ENCODE measurements at regions of chr3 and their contacts with region 1.

Region 1: DNA sequence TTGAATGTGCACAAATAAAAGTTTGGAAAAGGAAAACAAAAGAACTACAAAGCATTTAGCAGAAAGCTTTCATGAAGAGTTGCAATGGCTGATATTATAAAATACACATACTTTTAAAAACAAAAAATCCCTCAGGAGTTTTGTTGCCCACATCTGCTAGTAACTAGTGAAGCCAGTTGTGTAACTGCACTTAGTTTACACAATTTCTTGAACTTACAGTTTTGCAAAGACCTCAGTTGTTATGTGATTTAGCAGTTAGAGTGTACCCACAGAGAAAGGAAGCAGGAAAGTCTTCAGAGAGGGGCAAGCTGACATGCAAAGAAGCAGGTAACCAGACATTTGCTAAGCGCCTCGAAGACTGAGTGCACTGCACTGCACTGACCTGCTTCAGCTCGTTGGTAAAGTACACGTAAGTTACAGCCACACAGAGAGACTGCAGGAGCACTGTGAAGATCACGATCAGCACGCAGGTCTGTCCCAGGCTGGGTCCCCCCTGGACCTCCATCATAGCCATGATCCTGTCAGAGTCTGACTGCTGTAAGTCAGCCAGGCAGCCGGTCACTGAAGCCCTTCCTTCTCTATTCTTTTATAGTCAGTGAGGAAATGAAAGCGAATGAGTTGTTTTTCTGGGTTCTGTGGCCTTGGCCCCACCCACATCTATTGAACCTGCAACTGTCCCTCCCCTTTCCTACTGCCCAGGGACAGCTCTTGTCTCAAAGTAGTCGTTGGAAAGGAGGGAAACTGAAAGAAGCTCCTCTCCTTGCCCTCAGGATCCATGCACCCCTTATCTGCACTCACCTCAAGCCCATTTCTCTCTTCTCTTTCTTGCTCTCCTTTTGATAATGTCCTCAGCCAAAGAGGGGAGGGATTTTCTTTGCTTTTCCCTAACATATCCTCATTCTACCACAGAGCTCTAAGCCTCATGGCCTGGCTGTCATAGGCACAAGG is at the start of gene TNFSF10:
- DNase-seq: peak; percentile 15 to 71 (median 39)
- ATAC-seq: peak; percentile 80 to 86 (median 82)
- H3K4me3 ChIP-seq: peak within 1 kb of the TSS; percentile 64 to 73
- H3K4me3 Mint-ChIP-seq: peak within 1 kb of the TSS; percentile 93 to 97 (median 96)
- H3K27ac ChIP-seq: peak within 1 kb of the TSS; percentile 84
- H3K27ac Mint-ChIP-seq: peak within 1 kb of the TSS; percentile 98 to 99
- H3K4me1 ChIP-seq: peaks cover 18 to 25% of the 10 kb centered on the region in 2 experiments
- H3K4me1 Mint-ChIP-seq: peaks cover 53 to 64% (median 55%) of the 10 kb centered on the region in 3 donors
- H3K27me3 ChIP-seq: no peaks in the 10 kb centered on the region
- H3K27me3 Mint-ChIP-seq: no peaks in the 10 kb centered on the region
- total RNA-seq, gene TNFSF10: 22.3 to 49.7 (median 35.8) TPM

Region 2: GRCh38 chr3:172511783-172512762 is 11.1 kb before region 1 on chr3:
- CTCF ChIA-PET with region 1: interaction called in 1 of 2 experiments, 4 read pairs
- POLR2A ChIA-PET with region 1: interaction called in 1 of 2 experiments, 12 read pairs
- DNase-seq: peak in 34 of 35 experiments; percentile 26 to 77 (median 56)
- ATAC-seq: peak; percentile 60 to 76 (median 68)
- H3K4me3 ChIP-seq: peak overlapping the region; percentile 1 to 60
- H3K4me3 Mint-ChIP-seq: peak overlapping the region; percentile 54 to 93 (median 67)
- H3K27ac ChIP-seq: peak overlapping the region; percentile 52
- H3K27ac Mint-ChIP-seq: peak overlapping the region; percentile 94 to 95
- H3K4me1 ChIP-seq: peaks cover 44 to 50% of the 10 kb centered on the region in 2 experiments
- H3K4me1 Mint-ChIP-seq: peaks cover 68 to 81% (median 76%) of the 10 kb centered on the region in 3 donors
- H3K27me3 ChIP-seq: no peaks in the 10 kb centered on the region
- H3K27me3 Mint-ChIP-seq: no peaks in the 10 kb centered on the region

Region 3: GRCh38 chr3:172799251-172799650 is 276.1 kb after region 1 on chr3:
- CTCF ChIA-PET with region 1: no interaction called
- POLR2A ChIA-PET with region 1: no interaction called
- DNase-seq: no peak
- ATAC-seq: no peak
- H3K4me3 ChIP-seq: no peak overlapping the region
- H3K4me3 Mint-ChIP-seq: no peak overlapping the region
- H3K27ac ChIP-seq: no peak overlapping the region
- H3K27ac Mint-ChIP-seq: no peak overlapping the region
- H3K4me1 ChIP-seq: no peaks in the 10 kb centered on the region
- H3K4me1 Mint-ChIP-seq: no peaks in the 10 kb centered on the region
- H3K27me3 ChIP-seq: no peaks in the 10 kb centered on the region
- H3K27me3 Mint-ChIP-seq: no peaks in the 10 kb centered on the region